AG04450 (cell line): ENCODE measurements at regions of chr12 and their contacts with region 1.

Region 1: DNA sequence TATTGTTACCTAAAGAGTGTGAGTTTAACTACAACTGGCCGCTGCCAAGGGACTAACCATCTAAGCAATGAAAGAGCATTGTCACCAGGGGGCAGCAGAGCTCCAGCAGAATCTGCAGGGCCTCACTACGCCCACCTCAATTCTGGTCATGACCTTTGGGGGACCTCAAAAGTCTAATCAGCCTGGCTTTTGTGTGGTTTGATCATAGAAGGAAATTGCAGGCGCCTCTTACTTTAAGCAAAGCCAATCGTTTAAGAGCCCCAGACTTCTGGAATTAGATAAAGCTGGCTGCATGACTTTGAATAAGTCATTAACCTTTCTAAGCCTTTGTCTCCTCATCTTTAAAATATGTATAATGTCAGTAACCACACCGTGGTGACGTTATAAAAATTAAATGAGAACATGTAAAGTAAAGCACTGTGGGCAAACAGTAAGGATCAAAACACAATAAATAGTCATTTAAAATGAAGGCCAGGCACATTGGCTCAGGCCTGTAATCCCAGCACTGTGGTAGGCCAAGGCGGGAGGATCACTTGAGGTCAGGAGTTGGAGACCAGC is 58.6 kb downstream of the TBX3 start:
- DNase-seq: peak; percentile 42
- H3K4me3 ChIP-seq: no peak overlapping the region
- H3K27ac ChIP-seq: no peak overlapping the region
- H3K27me3 ChIP-seq: peaks cover under 1% of the 10 kb centered on the region
- CTCF ChIP-seq: peak; percentile 92

Region 2: DNA sequence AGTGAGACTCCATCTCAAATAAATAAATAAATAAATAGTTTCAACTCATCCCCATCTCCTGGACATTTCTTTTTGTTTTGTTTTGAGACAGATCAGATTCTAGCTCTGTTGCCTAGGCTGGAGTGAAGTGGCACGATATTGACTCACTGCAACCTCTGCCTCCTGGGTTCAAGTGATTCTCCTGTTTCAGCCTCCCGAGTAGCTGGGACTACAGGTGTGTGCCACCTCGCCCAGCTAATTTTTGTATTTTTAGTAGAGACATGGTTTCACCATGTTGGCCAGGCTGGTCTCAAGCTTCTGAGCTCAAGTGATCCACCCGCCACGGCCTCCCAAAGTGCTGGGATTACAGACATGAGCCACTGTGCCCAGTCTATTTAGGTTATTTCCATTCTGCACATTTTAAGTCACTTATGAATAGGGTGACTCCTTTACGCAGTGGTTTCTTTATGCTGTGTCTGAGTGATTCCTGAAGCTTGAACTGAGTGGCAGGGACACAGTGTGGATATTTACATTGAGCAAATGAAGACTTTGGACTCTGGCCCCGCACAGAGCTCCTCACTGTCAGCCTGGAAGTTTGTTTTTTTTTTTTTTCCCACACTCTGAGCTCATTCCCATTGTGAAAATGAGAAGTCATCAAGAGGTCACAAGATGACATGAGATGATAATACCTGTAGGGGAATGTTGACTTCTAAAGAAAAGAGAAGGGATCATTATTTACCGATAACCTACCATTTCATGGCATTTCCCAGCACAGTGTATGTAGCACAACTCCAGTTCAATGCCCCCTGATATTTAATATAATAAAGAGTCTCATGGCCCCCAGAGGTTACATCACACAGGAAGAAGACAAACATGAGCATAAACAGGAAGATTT is 14.0 kb before region 1 on chr12:
- CTCF ChIA-PET with region 1: interaction called, 27 read pairs
- POLR2A ChIA-PET with region 1: no interaction called
- DNase-seq: no peak
- H3K4me3 ChIP-seq: no peak overlapping the region
- H3K27ac ChIP-seq: no peak overlapping the region
- H3K27me3 ChIP-seq: no peaks in the 10 kb centered on the region
- CTCF ChIP-seq: no peak

Region 3: GRCh38 chr12:114636723-114637483 is 11.5 kb after region 1 on chr12:
- CTCF ChIA-PET with region 1: interaction called, 51 read pairs
- POLR2A ChIA-PET with region 1: no interaction called
- DNase-seq: no peak
- H3K4me3 ChIP-seq: no peak overlapping the region
- H3K27ac ChIP-seq: no peak overlapping the region
- H3K27me3 ChIP-seq: peaks cover 2% of the 10 kb centered on the region
- CTCF ChIP-seq: peak; percentile 64

Region 4: DNA sequence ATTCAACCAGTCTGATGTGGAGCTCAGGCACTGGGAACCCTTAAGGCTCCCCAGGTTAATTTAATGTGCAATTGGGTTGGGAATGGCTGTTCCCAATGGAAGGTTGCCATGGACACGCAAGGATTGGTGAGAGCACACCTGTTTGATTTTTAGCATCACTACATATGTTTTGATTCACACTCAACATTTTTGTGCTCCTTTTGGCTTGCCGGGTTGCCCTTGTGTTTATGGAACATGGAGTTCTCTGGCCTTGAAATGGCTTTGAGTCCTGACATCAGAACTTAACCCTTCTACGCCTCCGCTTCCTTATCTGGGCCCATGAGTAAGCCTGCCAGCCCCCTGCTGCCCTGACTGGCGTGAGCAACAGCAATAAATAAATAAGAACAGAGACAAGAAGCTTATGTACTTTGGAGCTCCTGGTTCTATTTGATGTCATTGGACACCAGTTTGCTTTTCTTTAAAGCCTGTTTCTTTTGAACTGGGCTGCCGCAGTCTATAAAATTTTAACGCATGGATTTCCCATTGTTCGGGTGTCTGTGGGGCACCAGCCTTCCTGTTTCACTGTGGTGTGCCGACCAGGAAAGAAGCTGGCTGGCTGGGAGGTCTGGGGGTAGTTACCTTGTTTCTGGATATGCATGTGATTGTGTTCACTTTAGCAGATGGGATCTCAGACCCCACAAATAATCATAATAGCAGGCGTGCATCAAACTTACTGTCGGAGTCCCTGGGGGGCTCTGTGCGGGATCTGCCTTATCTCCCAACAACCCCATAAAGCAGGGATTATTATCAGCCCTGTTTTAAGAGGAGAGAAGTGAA is 30.8 kb after region 1 on chr12:
- CTCF ChIA-PET with region 1: interaction called, 19 read pairs
- POLR2A ChIA-PET with region 1: no interaction called
- DNase-seq: peak; percentile 78
- H3K4me3 ChIP-seq: no peak overlapping the region
- H3K27ac ChIP-seq: peak overlapping the region; percentile 54
- H3K27me3 ChIP-seq: no peaks in the 10 kb centered on the region
- CTCF ChIP-seq: no peak

Region 5: GRCh38 chr12:114949078-114949830 is 323.9 kb after region 1 on chr12:
- CTCF ChIA-PET with region 1: no interaction called
- POLR2A ChIA-PET with region 1: no interaction called
- DNase-seq: no peak
- H3K4me3 ChIP-seq: no peak overlapping the region
- H3K27ac ChIP-seq: no peak overlapping the region
- H3K27me3 ChIP-seq: no peaks in the 10 kb centered on the region
- CTCF ChIP-seq: no peak

Region 6: DNA sequence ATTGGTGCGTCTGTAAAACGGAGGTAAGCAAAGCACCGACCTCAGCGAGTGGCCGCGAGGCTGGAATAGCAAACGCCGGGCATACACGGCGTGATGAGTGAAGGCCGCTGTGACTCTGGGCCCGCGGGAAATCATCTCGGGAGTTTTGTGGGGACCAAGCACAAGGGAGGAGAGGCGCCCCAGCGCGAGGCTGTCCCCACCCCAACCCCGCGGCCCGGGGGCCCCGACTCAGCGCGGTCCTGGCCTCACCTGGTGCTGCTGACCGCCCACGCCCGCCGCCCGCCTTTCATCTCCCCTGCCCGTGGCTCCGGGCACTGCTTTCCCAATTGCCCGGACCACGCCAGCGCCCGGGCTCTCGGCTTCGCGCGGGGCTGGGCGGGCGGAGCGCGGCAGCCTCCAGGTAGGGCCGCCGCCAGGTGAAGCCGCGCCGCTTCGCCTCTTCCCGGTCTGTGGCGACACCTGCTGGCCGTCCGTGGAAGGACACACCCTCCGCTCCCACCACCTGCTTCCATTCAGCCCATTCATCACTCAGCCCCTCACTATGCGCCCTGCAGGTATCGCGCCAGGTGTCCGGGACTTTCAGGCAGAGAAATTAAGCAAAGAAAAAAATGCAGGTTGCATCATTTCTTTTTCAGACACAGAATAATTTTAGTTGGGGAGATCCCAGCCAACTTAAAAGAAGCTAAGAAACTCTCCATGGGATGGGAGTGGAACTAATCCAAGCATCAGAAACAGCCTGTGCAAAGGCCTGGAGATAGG is 1291.7 kb after region 1 on chr12:
- CTCF ChIA-PET with region 1: interaction called, 91 read pairs
- POLR2A ChIA-PET with region 1: no interaction called
- DNase-seq: no peak
- H3K4me3 ChIP-seq: no peak overlapping the region; the same call in 1 of the 2 replicates
- H3K27ac ChIP-seq: no peak overlapping the region
- H3K27me3 ChIP-seq: peaks cover 5% of the 10 kb centered on the region
- CTCF ChIP-seq: peak; percentile 83